ENCODE measurements at regions of chr11 and their contacts with region 1.

Region 1: DNA sequence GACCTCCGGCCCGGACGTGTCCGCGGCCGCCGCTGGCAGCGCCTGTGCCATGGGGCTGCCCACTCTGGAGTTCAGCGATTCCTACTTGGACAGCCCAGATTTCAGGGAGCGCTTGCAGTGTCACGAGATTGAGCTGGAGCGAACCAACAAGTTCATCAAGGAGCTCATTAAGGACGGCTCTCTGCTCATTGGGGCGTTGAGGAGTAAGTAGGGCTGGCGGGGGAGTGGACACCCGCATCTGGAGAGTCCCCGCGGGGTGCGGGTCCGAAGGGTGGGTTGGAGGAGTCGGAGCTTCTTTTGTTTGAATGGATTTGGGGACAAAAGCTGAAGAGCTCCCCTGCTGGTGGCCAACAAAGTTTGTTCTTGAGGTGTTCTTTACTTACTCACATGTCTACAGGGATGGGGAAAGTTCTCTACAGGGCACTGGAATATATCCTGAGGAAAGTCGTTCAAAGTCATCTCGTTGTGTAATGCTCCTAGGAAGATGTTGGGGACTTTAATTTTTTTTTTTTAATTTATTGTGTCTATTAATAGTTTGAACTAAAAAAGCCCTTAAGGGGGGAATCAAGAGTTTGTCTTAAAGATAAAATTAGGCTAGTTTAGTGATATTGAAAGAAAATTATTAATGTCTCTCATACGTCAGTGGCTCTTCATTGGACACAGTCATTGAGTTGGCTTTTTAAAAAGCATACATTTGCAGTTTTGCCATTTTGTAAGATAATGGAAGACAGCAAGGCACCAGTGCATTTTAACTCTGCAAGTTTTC is 725 bp downstream of the ARHGAP42 start:
- DNase-seq: peak; percentile 77

Region 2: DNA sequence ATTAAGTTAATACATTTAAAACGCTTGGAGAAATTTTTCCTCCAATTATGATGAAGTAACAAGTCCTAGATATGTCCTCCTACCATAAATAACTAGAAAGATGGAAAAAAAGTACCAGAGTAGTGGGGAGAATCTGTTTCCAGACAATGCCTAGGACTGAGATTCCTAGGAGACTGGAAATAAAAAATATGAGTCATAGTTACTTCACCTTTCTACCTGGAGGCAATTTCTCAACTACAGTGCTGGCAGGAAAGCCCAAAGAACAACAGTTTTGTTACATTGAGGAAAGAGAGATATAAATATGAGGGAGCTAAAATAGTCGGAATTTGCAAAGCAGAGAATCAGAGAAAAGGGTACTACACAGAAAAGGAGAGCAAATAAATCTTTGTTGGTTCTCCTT is 202.9 kb before region 1 on chr11:
- in situ Hi-C with region 1: no loop called
- DNase-seq: no peak

Region 3: DNA sequence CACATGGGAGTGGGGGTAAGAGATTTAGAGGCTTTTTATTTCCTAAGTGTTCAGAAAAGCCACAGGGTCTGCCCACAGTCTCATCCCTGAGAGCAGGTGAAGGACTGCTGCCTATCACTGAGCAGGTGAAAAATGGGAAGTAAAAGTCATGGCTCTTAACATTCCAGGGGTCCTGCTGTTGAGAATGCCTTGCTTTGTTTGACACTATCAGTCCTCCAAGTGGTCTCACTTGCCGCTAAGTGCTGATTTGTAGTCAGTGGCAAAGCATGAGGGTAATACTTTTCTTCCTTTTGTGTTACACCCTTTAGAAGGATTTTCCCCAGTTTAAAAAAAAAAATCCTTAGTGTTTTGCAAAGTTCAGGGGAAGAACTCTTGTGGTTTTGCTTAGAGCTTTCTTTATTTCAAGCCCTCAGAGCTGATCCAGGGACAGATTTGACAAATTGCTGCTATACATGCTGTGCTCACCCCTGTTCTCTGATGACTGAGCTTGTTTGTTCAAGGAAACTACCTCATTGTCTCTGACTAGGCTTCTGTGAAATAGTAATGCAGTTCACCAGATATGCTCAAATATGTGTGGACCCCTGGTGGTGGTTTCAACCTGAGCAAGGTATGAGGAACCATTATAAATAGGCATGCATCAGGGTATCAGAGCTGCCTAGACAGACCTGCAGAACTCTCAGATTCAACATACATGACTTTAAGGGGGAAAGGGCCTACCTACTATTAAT is 140.3 kb after region 1 on chr11:
- in situ Hi-C with region 1: loop called (anchors 25 kb)
- DNase-seq: peak; percentile 66